Gastrocnemius medialis (tissue), 4 donors: ENCODE measurements at regions of chr19 and their contacts with region 1.

Region 1: GRCh38 chr19:42325273-42325895 is at the start of gene MEGF8:
- DNase-seq: peak; percentile 96 to 98
- ATAC-seq: peak; percentile 99
- H3K4me3 ChIP-seq: peak within 1 kb of the TSS; percentile 64 to 96 (median 80)
- H3K27ac ChIP-seq: peak within 1 kb of the TSS; percentile 64 to 89 (median 84)
- H3K4me1 ChIP-seq: peaks cover 26 to 32% of the 10 kb centered on the region in 2 donors
- H3K27me3 ChIP-seq: peaks cover 14 to 20% (median 18%) of the 10 kb centered on the region in 3 donors
- CTCF ChIP-seq: peak; percentile 78 to 86 (median 82)
- POLR2A ChIP-seq: peak; percentile 67 to 84
- total RNA-seq, gene MEGF8: 7.3 to 12.3 (median 10.3) TPM

Region 2: DNA sequence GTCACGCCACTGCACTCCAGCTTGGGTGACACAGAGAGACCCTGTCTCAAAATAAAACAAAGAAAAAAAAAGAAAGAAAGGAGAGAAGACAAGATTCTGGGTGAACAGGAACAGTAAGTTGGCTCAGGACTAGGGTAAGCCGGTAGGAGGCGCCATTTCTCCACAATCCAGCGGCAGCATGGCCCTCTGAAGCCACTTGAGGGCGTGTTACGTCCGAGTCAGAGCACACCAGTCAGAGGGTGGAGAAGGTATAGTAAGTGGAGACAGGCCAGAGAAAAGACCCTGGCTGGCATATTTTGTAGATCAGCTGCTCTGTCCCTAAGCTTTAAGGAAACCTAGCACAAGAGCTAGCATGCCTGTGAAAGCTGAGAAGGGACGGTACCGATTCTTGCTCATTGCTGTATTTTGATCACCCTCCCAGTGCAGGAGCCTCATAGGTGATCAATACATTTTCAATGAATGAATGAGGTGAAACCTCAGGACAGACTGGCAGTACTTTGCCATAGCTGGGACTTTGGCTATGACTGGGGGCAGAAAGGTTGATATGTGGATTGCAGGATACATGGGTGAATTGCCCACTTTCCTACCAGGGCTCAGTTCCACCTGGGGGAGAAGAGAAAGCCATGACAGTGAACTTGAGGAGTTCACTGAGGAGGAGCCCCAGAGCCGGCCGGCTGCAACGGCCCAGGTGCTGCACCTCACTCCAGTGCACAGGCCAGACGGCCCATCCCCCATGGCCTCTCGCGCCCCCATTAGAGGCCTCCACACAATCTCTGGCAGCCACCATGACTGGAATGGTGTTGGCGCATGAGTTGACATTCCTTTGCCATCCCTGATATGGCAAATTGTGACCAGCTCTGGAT is 216.6 kb before region 1 on chr19:
- in situ Hi-C with region 1: loop called in 1 of 4 experiments (anchors 25 kb)
- intact Hi-C with region 1: no loop called
- DNase-seq: peak; percentile 38 to 43
- ATAC-seq: no peak
- H3K4me3 ChIP-seq: no peak overlapping the region
- H3K27ac ChIP-seq: no peak overlapping the region
- H3K4me1 ChIP-seq: no peaks in the 10 kb centered on the region
- H3K27me3 ChIP-seq: peaks cover 0 to 9% (median 7%) of the 10 kb centered on the region in 3 donors
- CTCF ChIP-seq: peak in 4 of 5 experiments; percentile 53 to 74 (median 64)
- POLR2A ChIP-seq: no peak

Region 3: GRCh38 chr19:42244347-42245220 is 80.8 kb before region 1 on chr19:
- in situ Hi-C with region 1: loop called in 1 of 4 experiments (anchors 10 kb)
- intact Hi-C with region 1: loop called (anchors 1 kb)
- DNase-seq: peak; percentile 87 to 89
- ATAC-seq: peak; percentile 53 to 54
- H3K4me3 ChIP-seq: peak overlapping the region; percentile 55 to 77 (median 73)
- H3K27ac ChIP-seq: peak overlapping the region; percentile 86 to 95 (median 87)
- H3K4me1 ChIP-seq: peaks cover 36 to 39% of the 10 kb centered on the region in 2 donors
- H3K27me3 ChIP-seq: no peaks in the 10 kb centered on the region
- CTCF ChIP-seq: peak; percentile 40 to 77 (median 64)
- POLR2A ChIP-seq: peak; percentile 59 to 71

Region 4: GRCh38 chr19:42268704-42269477 is 56.5 kb before region 1 on chr19 and contains the start of gene CIC:
- in situ Hi-C with region 1: no loop called
- intact Hi-C with region 1: loop called (anchors 1 kb)
- DNase-seq: peak; percentile 100
- ATAC-seq: peak; percentile 84 to 91
- H3K4me3 ChIP-seq: peak within 1 kb of the TSS; percentile 68 to 79 (median 74)
- H3K27ac ChIP-seq: peak within 1 kb of the TSS; percentile 95 to 98 (median 97)
- H3K4me1 ChIP-seq: peaks cover 30% of the 10 kb centered on the region in 2 donors
- H3K27me3 ChIP-seq: no peaks in the 10 kb centered on the region
- CTCF ChIP-seq: no peak
- POLR2A ChIP-seq: peak in 1 of 2 donors; percentile 18
- total RNA-seq, gene CIC: 15.2 to 52.2 (median 41.5) TPM

Region 5: DNA sequence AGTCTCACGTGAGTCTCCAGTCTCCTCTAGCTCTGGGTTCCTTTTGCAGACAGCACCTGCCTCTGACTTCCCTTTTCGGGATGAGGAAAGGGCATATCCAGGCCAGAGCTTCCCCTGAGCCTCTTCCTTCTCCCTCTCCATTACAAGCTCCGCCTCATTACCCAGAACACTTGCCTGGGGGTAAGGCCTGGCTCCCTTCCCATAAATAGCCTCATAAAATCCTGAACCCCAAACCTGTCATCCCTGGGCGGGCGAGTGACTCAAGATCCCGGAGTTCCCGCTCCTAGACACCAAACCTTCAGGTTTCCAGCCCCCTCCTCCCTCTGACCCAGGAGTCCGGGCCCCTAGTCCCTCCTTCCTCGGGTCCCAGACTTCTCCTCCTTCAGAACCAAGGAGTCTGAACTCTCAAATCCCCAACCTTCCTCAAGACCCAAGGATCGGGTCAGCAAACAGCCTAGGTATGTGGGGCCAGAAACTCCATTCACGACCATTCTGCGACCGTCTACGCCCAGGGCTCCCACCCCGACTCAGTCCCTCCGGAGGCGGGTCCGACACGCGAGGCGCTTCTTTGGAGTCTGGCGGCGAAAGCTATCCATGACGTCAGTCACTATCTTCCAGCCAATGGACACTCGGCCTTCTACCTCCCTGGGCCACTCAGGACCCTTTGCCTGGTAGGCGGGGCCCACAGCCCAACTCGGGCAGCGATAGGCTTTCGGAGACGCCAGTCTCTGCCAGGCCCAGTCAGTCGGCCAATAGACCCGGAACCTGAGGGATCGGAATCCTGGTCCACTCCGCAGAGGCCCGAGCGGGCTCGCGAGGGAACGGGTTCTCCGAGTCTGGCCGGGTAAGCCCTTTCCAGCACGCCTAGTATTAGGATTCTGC is 71.2 kb after region 1 on chr19:
- in situ Hi-C with region 1: no loop called
- intact Hi-C with region 1: loop called (anchors 5 kb)
- DNase-seq: peak; percentile 96 to 98
- ATAC-seq: peak; percentile 98 to 99
- H3K4me3 ChIP-seq: peak overlapping the region; percentile 60 to 66 (median 63)
- H3K27ac ChIP-seq: peak overlapping the region; percentile 69 to 81 (median 74)
- H3K4me1 ChIP-seq: peaks cover 10 to 18% of the 10 kb centered on the region in 2 donors
- H3K27me3 ChIP-seq: no peaks in the 10 kb centered on the region
- CTCF ChIP-seq: no peak
- POLR2A ChIP-seq: peak; percentile 62 to 65